ENCODE measurements at regions of chr7 and their contacts with region 1.

Region 1: DNA sequence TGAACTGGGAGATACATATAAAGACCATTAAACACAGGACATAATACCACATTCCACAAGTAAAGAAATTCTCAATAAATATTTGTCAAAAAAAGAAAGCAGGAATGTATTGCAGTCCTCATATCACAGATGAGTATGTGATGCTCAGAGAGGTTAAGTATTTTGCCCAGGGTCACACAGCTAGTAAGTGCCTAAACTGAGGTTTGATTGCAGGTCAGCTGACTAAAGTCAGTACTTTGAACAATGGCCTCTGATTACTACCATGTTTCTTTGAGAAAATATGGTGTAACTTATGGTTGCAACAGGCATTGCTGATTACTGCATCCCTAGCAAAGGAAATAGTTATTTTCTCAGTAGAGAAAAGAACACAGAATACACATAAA is 267.1 kb downstream of the ELMO1 start:
- DNase-seq: no peak
- ATAC-seq: no peak
- H3K4me3 ChIP-seq: no peak overlapping the region
- H3K4me3 Mint-ChIP-seq: no peak overlapping the region
- H3K27ac ChIP-seq: no peak overlapping the region
- H3K27ac Mint-ChIP-seq: no peak overlapping the region
- H3K4me1 ChIP-seq: no peaks in the 10 kb centered on the region
- H3K4me1 Mint-ChIP-seq: no peaks in the 10 kb centered on the region
- H3K27me3 ChIP-seq: no peaks in the 10 kb centered on the region
- H3K27me3 Mint-ChIP-seq: no peaks in the 10 kb centered on the region
- CTCF ChIP-seq: no peak

Region 2: GRCh38 chr7:36440880-36441279 is 740.7 kb before region 1 on chr7:
- CTCF ChIA-PET with region 1: interaction called, 19 read pairs
- POLR2A ChIA-PET with region 1: no interaction called
- intact Hi-C with region 1: loop called in 1 of 2 experiments (anchors 5 kb)
- DNase-seq: peak in 2 of 9 experiments; percentile 17 to 34
- ATAC-seq: no peak
- H3K4me3 ChIP-seq: no peak overlapping the region
- H3K4me3 Mint-ChIP-seq: no peak overlapping the region
- H3K27ac ChIP-seq: no peak overlapping the region
- H3K27ac Mint-ChIP-seq: no peak overlapping the region
- H3K4me1 ChIP-seq: no peaks in the 10 kb centered on the region
- H3K4me1 Mint-ChIP-seq: no peaks in the 10 kb centered on the region
- H3K27me3 ChIP-seq: no peaks in the 10 kb centered on the region
- H3K27me3 Mint-ChIP-seq: no peaks in the 10 kb centered on the region
- CTCF ChIP-seq: no peak

Region 3: DNA sequence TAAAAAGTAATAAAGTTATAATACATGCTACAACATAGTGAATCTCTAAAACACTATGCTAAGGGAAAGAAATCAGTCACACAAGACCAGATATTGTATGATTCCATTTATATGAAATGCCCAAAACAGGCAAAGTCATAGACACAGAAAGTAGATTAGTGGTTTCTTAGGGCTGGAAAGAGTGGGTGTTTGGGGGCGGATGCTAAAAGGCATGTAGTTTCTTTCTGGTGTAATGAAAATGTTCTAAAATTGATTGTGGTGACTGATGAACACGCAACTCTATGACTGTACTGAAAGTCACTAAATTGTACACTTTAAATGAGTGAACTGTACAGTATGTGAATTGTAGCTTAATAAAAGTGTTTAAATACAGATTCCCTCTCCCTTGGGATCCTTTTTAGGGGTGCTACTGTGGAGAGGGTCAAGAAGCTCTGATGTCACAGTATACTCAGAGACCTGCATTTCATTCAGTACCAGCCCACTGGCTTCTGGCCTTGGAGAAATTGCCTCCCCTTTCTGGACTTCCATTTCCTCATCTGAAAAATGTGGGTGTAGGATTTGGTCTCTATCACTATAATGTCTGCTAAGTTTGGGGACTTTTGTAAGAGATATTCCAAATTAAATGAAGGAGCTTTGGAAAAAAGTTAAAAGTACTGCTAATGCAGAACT is 503.6 kb before region 1 on chr7:
- CTCF ChIA-PET with region 1: interaction called, 34 read pairs
- POLR2A ChIA-PET with region 1: interaction called, 9 read pairs
- intact Hi-C with region 1: loop called (anchors 1 to 2 kb)
- DNase-seq: peak in 3 of 9 experiments; percentile 31 to 64 (median 32)
- ATAC-seq: peak; percentile 59
- H3K4me3 ChIP-seq: peak overlapping the region in 1 of 2 experiments; percentile 24
- H3K4me3 Mint-ChIP-seq: peak overlapping the region; percentile 70
- H3K27ac ChIP-seq: peak overlapping the region; percentile 15 to 75
- H3K27ac Mint-ChIP-seq: peak overlapping the region; percentile 91
- H3K4me1 ChIP-seq: peaks cover 32% of the 10 kb centered on the region
- H3K4me1 Mint-ChIP-seq: peaks cover 63% of the 10 kb centered on the region
- H3K27me3 ChIP-seq: no peaks in the 10 kb centered on the region
- H3K27me3 Mint-ChIP-seq: no peaks in the 10 kb centered on the region
- CTCF ChIP-seq: no peak

Region 4: DNA sequence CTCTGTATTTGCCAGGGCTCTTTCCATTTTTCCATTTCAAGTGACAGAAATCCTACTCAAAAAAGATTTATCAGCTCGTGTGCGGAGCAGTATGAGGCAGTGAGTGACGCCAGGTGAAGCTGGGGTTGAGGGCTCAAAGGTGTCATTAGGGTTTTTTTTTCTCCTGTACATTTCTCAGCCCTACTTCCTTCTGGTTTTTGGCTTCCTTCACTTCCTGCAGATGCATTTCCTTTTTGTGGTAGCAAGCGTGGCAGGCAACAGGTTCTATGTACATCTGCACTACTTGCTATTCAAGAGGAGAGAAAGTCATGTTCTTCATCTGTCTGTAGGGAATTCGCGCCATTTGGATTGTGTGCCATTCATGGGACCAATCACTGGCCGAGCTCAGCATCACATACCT is 404.5 kb before region 1 on chr7:
- CTCF ChIA-PET with region 1: interaction called, 3 read pairs
- POLR2A ChIA-PET with region 1: no interaction called
- intact Hi-C with region 1: loop called in 1 of 2 experiments (anchors 5 kb)
- DNase-seq: peak in 8 of 9 experiments; percentile 21 to 93 (median 58)
- ATAC-seq: peak; percentile 69
- H3K4me3 ChIP-seq: peak overlapping the region; percentile 26 to 38
- H3K4me3 Mint-ChIP-seq: peak overlapping the region; percentile 76
- H3K27ac ChIP-seq: peak overlapping the region; percentile 62 to 83
- H3K27ac Mint-ChIP-seq: peak overlapping the region; percentile 98
- H3K4me1 ChIP-seq: peaks cover 75% of the 10 kb centered on the region
- H3K4me1 Mint-ChIP-seq: peaks cover 90% of the 10 kb centered on the region
- H3K27me3 ChIP-seq: no peaks in the 10 kb centered on the region
- H3K27me3 Mint-ChIP-seq: no peaks in the 10 kb centered on the region
- CTCF ChIP-seq: no peak

Region 5: DNA sequence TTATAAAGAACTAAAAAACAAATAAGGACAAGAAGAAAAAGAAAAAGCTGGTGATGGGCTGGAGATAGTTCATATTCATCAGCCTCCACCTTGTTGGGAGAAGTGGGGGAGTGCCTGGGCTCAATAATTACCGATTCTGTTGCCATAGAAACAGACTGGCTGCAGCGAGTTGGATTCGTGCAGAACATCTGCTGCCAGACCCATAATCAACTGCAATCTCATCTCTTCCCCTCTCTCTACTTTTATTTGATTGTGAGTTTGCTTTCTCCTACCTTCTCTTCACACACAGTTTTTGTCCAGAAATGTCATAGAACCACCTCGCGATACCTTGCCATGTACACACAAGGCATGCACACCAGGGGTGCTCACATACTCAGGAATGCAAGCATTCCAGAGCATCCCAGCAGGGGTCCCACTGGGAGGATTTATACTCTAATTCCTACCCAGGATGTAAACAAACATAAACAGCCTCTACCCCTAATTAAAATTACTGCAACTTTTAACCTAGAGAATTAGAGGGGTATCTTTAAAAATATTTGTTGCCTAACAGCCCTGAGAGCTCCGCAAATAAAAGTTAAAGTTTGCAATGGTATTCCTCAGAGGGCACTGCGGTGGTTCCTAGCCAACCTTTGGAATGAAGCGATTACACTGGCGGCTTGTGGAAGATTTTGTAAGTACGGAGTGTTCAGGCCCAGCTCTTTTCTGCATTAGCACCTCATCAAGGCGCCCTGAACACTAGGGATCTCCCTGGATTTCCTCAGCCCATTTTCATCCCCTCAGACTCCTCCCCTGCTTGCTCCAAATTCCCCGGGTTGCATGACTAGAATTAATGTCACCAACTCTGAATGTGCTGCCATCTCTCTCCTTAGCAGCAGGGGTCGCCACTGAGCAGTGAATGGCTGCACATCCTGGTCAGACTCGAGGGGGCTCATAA is 194.8 kb before region 1 on chr7:
- CTCF ChIA-PET with region 1: interaction called, 30 read pairs
- POLR2A ChIA-PET with region 1: no interaction called
- intact Hi-C with region 1: loop called (anchors 1 to 5 kb)
- DNase-seq: peak; percentile 28 to 72 (median 60)
- ATAC-seq: peak; percentile 71
- H3K4me3 ChIP-seq: no peak overlapping the region
- H3K4me3 Mint-ChIP-seq: no peak overlapping the region
- H3K27ac ChIP-seq: no peak overlapping the region
- H3K27ac Mint-ChIP-seq: no peak overlapping the region
- H3K4me1 ChIP-seq: no peaks in the 10 kb centered on the region
- H3K4me1 Mint-ChIP-seq: peaks cover 46% of the 10 kb centered on the region
- H3K27me3 ChIP-seq: no peaks in the 10 kb centered on the region
- H3K27me3 Mint-ChIP-seq: no peaks in the 10 kb centered on the region
- CTCF ChIP-seq: peak; percentile 79

Region 6: GRCh38 chr7:38411404-38411803 is 1229.9 kb after region 1 on chr7:
- CTCF ChIA-PET with region 1: no interaction called
- POLR2A ChIA-PET with region 1: no interaction called
- intact Hi-C with region 1: no loop called
- DNase-seq: peak in 2 of 9 experiments; percentile 20 to 30
- ATAC-seq: no peak
- H3K4me3 ChIP-seq: no peak overlapping the region
- H3K4me3 Mint-ChIP-seq: no peak overlapping the region
- H3K27ac ChIP-seq: no peak overlapping the region
- H3K27ac Mint-ChIP-seq: no peak overlapping the region
- H3K4me1 ChIP-seq: no peaks in the 10 kb centered on the region
- H3K4me1 Mint-ChIP-seq: peaks cover 22% of the 10 kb centered on the region
- H3K27me3 ChIP-seq: peaks cover 0 to 2% of the 10 kb centered on the region in 2 experiments
- H3K27me3 Mint-ChIP-seq: peaks cover 2% of the 10 kb centered on the region
- CTCF ChIP-seq: no peak

Measured in CD8-positive, alpha-beta T cell (primary cell).